ENCODE measurements at regions of chr1 and their contacts with region 1.

Region 1: DNA sequence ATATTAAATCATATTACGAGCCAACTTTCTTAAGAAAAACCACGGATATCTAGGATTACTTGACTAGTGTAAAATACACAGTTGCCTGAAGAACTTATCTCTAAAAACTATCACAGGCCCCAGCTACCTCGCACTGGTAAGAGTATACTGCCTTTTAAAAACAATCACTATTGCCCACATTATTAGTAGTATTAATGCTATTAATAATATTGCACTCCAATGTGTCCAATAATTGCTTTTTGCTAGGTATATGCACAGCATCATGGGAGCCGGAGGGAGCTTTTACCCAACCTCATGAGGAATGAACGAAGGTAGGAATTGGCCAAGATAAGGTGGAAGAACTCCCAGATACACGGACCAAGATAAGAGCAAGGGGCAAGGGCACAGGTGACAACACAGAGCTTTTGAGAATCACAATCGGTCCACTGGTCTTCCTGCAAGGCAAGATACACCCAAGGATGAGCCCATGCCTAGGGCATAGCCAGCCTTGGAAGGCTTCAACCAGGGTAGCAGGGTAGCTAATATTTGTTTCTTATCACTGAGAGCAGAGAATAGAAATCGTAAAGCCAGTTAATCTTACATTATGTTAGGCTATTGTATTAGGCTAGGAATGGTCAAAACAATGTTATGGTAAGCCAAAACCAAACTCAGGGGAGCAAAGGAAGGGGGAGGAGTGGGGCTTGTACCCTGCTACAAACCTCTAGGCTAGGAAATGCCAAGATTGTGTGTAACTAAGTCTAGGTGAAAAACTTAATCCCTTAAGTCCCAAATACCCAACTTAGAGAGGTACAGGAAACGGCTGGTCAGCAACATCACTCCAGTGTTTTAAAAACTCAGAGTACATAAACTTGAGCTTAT is 9.4 kb downstream of the GLUL start:
- DNase-seq: no peak
- H3K4me3 ChIP-seq: no peak overlapping the region
- H3K27ac ChIP-seq: no peak overlapping the region
- H3K4me1 ChIP-seq: no peaks in the 10 kb centered on the region
- H3K27me3 ChIP-seq: no peaks in the 10 kb centered on the region
- CTCF ChIP-seq: no peak

Region 2: GRCh38 chr1:182279724-182280503 is 102.3 kb before region 1 on chr1:
- CTCF ChIA-PET with region 1: no interaction called
- dilution Hi-C with region 1: loop called (anchors 5 kb)
- in situ Hi-C with region 1: no loop called
- intact Hi-C with region 1: no loop called
- DNase-seq: no peak
- H3K4me3 ChIP-seq: no peak overlapping the region
- H3K27ac ChIP-seq: no peak overlapping the region
- H3K4me1 ChIP-seq: no peaks in the 10 kb centered on the region
- H3K27me3 ChIP-seq: no peaks in the 10 kb centered on the region
- CTCF ChIP-seq: no peak

Region 3: GRCh38 chr1:182291584-182292192 is 90.5 kb before region 1 on chr1:
- CTCF ChIA-PET with region 1: no interaction called
- dilution Hi-C with region 1: no loop called
- in situ Hi-C with region 1: no loop called
- intact Hi-C with region 1: no loop called
- DNase-seq: no peak
- H3K4me3 ChIP-seq: no peak overlapping the region
- H3K27ac ChIP-seq: no peak overlapping the region
- H3K4me1 ChIP-seq: peaks cover 29% of the 10 kb centered on the region
- H3K27me3 ChIP-seq: no peaks in the 10 kb centered on the region
- CTCF ChIP-seq: no peak

Region 4: DNA sequence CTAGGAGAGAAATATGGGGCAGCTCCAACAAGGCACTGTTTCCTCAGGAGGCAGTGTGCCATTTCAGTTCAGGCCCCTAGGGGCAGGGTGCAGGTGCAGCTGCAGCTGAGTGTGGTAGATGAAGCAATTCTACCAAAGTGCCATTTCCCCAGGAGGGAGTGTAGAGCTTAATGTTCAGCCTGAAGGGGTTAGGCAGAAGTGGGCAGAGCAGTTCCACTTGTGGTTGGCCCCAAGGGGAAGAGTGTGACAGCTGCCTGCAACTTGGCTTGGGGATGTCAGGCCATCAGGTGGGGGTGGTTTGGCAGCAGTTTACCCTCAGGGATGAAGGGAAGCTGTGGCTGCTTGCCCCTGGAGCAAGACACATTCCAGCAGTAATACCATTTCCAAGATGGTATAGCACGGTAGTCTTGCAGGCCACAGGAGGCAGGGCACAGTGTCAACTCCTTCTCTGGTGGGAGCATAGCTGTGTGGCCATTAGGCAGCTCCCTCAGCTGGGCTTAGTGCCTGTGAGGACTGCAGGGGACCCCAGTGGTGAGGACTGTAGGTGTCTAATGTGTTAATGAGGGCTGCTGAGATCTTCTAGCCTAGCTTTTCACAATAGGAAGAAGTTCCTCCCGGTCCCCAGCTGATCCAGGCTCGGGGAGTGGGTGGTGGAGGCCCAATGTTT is 102.5 kb after region 1 on chr1:
- CTCF ChIA-PET with region 1: no interaction called
- dilution Hi-C with region 1: no loop called
- in situ Hi-C with region 1: no loop called
- intact Hi-C with region 1: no loop called
- DNase-seq: peak; percentile 2
- H3K4me3 ChIP-seq: no peak overlapping the region
- H3K27ac ChIP-seq: no peak overlapping the region
- H3K4me1 ChIP-seq: no peaks in the 10 kb centered on the region
- H3K27me3 ChIP-seq: no peaks in the 10 kb centered on the region
- CTCF ChIP-seq: peak; percentile 52